ENCODE measurements at regions of chr5 and their contacts with region 1.

Region 1: GRCh38 chr5:180328296-180329137 is 24.6 kb downstream of the GFPT2 start:
- DNase-seq: peak; percentile 91
- ATAC-seq: peak; percentile 53
- H3K4me3 Mint-ChIP-seq: no peak overlapping the region
- H3K27ac Mint-ChIP-seq: peak overlapping the region; percentile 32
- H3K4me1 Mint-ChIP-seq: peaks cover 61% of the 10 kb centered on the region
- H3K27me3 Mint-ChIP-seq: no peaks in the 10 kb centered on the region
- CTCF ChIP-seq: peak; percentile 92

Region 2: DNA sequence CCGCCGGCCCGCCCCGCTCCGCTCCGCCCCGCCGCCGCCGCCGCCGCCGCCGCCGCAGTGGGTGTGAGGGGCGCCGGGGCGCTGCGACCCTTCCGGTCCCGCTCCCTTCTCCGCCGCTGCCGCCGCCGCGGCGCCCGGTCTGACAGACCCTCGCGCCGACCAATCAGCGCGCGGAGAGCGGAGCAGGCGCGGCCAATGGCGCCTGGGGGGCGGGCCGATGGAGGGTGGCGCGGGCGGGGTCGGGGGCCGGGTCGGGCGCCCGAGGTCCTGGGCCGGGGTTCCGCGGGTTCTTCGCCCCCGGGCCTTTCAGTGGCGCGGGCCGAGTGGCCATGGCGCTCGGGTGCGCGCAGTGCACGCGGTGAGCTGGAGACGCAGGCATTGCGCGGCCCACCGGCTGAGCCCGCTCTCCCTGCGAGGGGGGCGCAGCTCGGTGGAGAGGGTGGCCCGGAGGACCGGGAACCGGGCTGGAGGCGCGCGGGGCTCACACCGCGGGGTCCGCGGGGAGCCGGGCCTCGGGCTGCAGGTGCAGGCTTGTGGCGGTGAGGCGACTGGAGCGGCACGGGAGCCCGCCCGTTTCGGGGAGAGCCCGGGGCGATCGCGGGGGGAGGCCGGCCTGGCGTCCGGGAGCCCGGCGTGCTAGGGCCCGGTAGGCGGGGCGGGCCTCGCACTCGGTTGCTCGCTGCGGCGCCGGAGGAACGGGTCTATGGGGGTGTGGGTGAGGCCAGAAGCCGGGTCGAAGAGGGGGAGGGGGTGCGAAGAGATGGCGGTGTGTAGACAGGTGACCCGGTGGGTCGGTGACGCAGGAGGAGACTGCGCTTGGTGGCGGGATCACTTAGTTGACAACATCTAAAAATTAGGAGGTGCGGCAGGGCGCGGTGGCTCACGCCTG is 36.3 kb before region 1 on chr5 and contains the start of gene MAPK9:
- CTCF ChIA-PET with region 1: interaction called, 35 read pairs
- POLR2A ChIA-PET with region 1: interaction called, 4 read pairs
- DNase-seq: peak; percentile 85
- ATAC-seq: peak; percentile 74
- H3K4me3 Mint-ChIP-seq: peak within 1 kb of the TSS; percentile 93
- H3K27ac Mint-ChIP-seq: peak within 1 kb of the TSS; percentile 88
- H3K4me1 Mint-ChIP-seq: peaks cover 64% of the 10 kb centered on the region
- H3K27me3 Mint-ChIP-seq: no peaks in the 10 kb centered on the region
- CTCF ChIP-seq: no peak
- total RNA-seq, gene MAPK9: 42.4 to 42.9 TPM (median 42.9 TPM) in 3 replicates

Region 3: GRCh38 chr5:180315762-180316212 is 12.7 kb before region 1 on chr5:
- CTCF ChIA-PET with region 1: interaction called, 76 read pairs
- POLR2A ChIA-PET with region 1: interaction called, 5 read pairs
- DNase-seq: peak; percentile 81
- ATAC-seq: peak; percentile 58
- H3K4me3 Mint-ChIP-seq: peak overlapping the region; percentile 20; the same call in 1 of the 2 replicates
- H3K27ac Mint-ChIP-seq: 0 out of 2 replicates have a peak overlapping the region, but pooled peaks have one; percentile 76
- H3K4me1 Mint-ChIP-seq: peaks cover 21% of the 10 kb centered on the region
- H3K27me3 Mint-ChIP-seq: no peaks in the 10 kb centered on the region
- CTCF ChIP-seq: peak; percentile 93

Region 4: DNA sequence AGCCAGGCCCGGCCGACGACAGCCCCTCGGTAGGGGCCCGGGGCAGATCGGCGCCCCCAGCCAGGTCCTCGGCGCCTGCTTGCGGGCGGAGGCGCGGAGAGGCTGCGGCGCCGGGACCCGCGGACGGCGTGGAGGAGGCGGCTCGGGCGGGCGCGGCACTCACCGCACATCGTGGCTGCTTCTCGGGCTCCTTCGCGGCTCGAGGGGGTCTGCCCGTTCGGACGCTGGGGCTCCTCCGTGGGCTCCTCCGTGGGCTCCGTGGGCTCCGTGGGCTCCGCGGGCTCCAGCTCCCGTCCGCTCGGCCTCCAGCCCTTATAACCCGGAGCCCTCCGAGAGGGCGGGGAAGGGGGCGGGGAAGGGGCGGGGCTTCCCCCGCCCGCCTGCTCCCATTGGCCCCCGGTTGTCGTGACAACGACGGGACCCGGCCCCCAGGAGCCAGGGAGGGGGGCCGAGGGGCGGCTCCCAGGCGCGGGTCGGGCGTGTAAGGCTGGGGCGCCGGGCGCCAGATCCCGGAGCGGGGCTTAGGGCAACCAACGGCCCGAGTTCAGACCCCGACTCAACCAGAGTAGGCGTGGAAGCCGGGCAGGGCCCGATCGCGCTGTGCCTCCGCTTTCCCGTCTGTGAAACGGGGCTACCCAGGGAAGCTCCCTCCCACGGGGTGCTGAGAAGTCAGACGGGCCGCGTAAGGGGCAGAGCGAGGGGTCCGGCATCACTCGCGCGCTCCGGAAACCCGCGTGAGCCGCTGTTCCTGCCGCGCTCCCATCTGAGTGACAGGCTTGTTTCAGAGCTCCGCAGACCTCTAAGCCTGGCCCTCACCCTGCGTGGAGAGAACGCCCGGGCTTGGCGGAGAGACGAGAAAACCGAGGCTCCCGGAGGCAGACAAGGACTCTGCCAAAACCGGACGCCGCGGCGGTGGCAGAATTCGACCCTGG is 24.8 kb after region 1 on chr5 and contains the start of gene GFPT2:
- CTCF ChIA-PET with region 1: interaction called, 18 read pairs
- POLR2A ChIA-PET with region 1: interaction called, 8 read pairs
- DNase-seq: peak; percentile 89
- ATAC-seq: peak; percentile 89
- H3K4me3 Mint-ChIP-seq: peak within 1 kb of the TSS; percentile 89
- H3K27ac Mint-ChIP-seq: 0 out of 2 replicates have a peak within 1 kb of the TSS, but pooled peaks have one; percentile 32
- H3K4me1 Mint-ChIP-seq: peaks cover 41% of the 10 kb centered on the region
- H3K27me3 Mint-ChIP-seq: peaks cover 25% of the 10 kb centered on the region
- CTCF ChIP-seq: no peak
- total RNA-seq, gene GFPT2: 124 to 138 TPM (median 136 TPM) in 3 replicates

Region 5: DNA sequence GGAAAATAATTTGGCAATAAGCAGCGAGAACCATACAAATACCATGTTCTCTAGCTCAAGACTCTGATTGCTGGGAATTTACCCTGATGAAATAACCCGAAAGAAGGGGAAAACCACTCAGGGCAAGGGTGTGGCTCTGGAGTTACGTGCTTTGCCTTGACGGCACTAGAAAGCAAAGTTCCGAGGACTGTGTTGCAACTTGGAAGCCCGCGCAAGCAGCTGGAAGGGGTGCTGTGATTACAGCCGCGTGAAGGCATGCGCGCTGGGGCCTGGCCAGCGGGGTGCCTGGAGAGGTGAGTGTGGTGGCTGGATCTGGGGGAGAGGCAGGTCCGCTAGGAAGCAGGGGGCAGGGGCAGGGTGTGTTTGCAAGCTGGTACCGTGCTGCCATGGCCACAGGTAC is 113.0 kb after region 1 on chr5:
- CTCF ChIA-PET with region 1: interaction called, 10 read pairs
- POLR2A ChIA-PET with region 1: no interaction called
- DNase-seq: no peak
- ATAC-seq: no peak
- H3K4me3 Mint-ChIP-seq: no peak overlapping the region
- H3K27ac Mint-ChIP-seq: no peak overlapping the region
- H3K4me1 Mint-ChIP-seq: peaks cover 6% of the 10 kb centered on the region; the same call in 1 of the 2 replicates
- H3K27me3 Mint-ChIP-seq: no peaks in the 10 kb centered on the region; the same call in 1 of the 2 replicates
- CTCF ChIP-seq: no peak

Region 6: DNA sequence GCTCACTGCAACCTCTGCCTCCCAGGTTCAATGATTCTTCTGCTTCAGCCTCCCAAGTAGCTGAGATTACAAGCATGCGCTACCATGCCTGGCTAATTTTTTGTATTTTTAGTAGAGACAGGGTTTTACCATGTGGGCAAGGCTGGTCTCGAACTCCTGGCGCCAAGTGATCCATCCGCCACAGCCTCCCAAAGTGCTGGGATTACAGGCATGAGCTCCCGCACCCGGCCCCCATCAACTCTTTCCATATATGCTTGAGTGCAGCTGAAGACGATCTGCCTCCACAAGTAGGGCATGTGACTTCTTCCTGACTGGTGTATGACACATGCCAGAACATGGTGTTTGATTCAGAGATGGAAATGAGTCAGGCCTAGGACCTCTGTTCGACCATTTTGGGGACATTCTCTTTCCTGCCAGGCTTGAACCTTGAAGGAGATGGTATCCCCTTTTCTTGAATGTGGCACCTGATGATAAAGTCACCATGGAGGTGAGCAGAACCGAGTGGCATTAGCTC is 158.2 kb after region 1 on chr5:
- CTCF ChIA-PET with region 1: interaction called, 12 read pairs
- POLR2A ChIA-PET with region 1: no interaction called
- DNase-seq: no peak
- ATAC-seq: no peak
- H3K4me3 Mint-ChIP-seq: no peak overlapping the region
- H3K27ac Mint-ChIP-seq: no peak overlapping the region
- H3K4me1 Mint-ChIP-seq: peaks cover 16% of the 10 kb centered on the region
- H3K27me3 Mint-ChIP-seq: no peaks in the 10 kb centered on the region
- CTCF ChIP-seq: no peak